Activated naive CD4-positive, alpha-beta T cell treated with anti-CD3 and anti-CD28 coated beads for 36 hours (primary cell): ENCODE measurements at regions of chrX and their contacts with region 1.

Region 1: GRCh38 chrX:71068049-71068763 is at the start of gene SNX12:
- DNase-seq: peak; percentile 93
- H3K4me3 Mint-ChIP-seq: peak within 1 kb of the TSS; percentile 96
- H3K27ac Mint-ChIP-seq: peak within 1 kb of the TSS; percentile 94
- H3K4me1 Mint-ChIP-seq: peaks cover 19% of the 10 kb centered on the region
- H3K27me3 Mint-ChIP-seq: no peaks in the 10 kb centered on the region
- total RNA-seq, gene SNX12: 32.9 to 35.2 TPM

Region 2: GRCh38 chrX:70755850-70756249 is 312.4 kb before region 1 on chrX:
- CTCF ChIA-PET with region 1: no interaction called
- intact Hi-C with region 1: loop called (anchors 10 kb)
- DNase-seq: peak; percentile 78
- H3K4me3 Mint-ChIP-seq: no peak overlapping the region
- H3K27ac Mint-ChIP-seq: no peak overlapping the region
- H3K4me1 Mint-ChIP-seq: peaks cover 12% of the 10 kb centered on the region
- H3K27me3 Mint-ChIP-seq: no peaks in the 10 kb centered on the region

Region 3: GRCh38 chrX:71095543-71095911 is 27.3 kb after region 1 on chrX and contains the start of gene FOXO4:
- CTCF ChIA-PET with region 1: interaction called, 3 read pairs
- intact Hi-C with region 1: loop called (anchors 1 kb)
- DNase-seq: peak; percentile 91
- H3K4me3 Mint-ChIP-seq: peak within 1 kb of the TSS; percentile 82
- H3K27ac Mint-ChIP-seq: peak within 1 kb of the TSS; percentile 72
- H3K4me1 Mint-ChIP-seq: peaks cover 30% of the 10 kb centered on the region
- H3K27me3 Mint-ChIP-seq: no peaks in the 10 kb centered on the region
- total RNA-seq, gene FOXO4: 7.9 to 8.9 TPM

Region 4: GRCh38 chrX:71111141-71111843 is 43.1 kb after region 1 on chrX and contains the start of gene IL2RG:
- CTCF ChIA-PET with region 1: no interaction called
- intact Hi-C with region 1: loop called (anchors 1 kb)
- DNase-seq: peak; percentile 87
- H3K4me3 Mint-ChIP-seq: peak within 1 kb of the TSS; percentile 93
- H3K27ac Mint-ChIP-seq: peak within 1 kb of the TSS; percentile 95
- H3K4me1 Mint-ChIP-seq: peaks cover 37% of the 10 kb centered on the region
- H3K27me3 Mint-ChIP-seq: no peaks in the 10 kb centered on the region
- total RNA-seq, gene IL2RG: 144 to 148 TPM

Region 5: GRCh38 chrX:71118032-71118984 is 50.1 kb after region 1 on chrX and contains the start of gene MED12:
- CTCF ChIA-PET with region 1: no interaction called
- intact Hi-C with region 1: loop called (anchors 2 kb)
- DNase-seq: peak; percentile 90
- H3K4me3 Mint-ChIP-seq: peak within 1 kb of the TSS; percentile 78
- H3K27ac Mint-ChIP-seq: peak within 1 kb of the TSS; percentile 90
- H3K4me1 Mint-ChIP-seq: peaks cover 21% of the 10 kb centered on the region
- H3K27me3 Mint-ChIP-seq: no peaks in the 10 kb centered on the region
- total RNA-seq, gene MED12: 43.5 to 43.6 TPM

Region 6: GRCh38 chrX:71254092-71254941 is 186.1 kb after region 1 on chrX and contains the start of gene ZMYM3:
- CTCF ChIA-PET with region 1: no interaction called
- intact Hi-C with region 1: loop called (anchors 5 kb)
- DNase-seq: peak; percentile 70
- H3K4me3 Mint-ChIP-seq: peak within 1 kb of the TSS; percentile 87
- H3K27ac Mint-ChIP-seq: peak within 1 kb of the TSS; percentile 76
- H3K4me1 Mint-ChIP-seq: peaks cover 29% of the 10 kb centered on the region
- H3K27me3 Mint-ChIP-seq: no peaks in the 10 kb centered on the region
- total RNA-seq, gene ZMYM3: 7.7 to 8.2 TPM

Region 7: DNA sequence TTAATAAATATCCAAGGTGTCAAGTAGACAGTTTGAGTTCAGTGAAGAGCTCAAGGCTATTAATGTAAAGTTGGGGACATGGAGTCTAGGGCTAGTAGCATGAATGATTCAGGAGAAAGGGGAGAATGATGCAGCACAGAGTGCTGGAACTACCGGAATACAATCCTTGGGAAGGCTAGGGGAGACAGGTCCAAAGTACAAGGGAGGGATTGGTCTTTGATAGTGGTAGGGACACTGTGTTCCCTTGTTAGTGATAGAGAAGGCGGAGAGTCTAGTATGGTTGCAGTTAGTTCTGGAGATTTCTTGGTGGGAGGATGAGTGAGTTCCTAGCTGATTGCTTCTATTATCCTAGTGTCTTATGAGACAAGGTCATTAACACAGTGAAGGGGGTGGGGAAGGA is 518.7 kb after region 1 on chrX:
- CTCF ChIA-PET with region 1: no interaction called
- intact Hi-C with region 1: no loop called
- DNase-seq: no peak
- H3K4me3 Mint-ChIP-seq: no peak overlapping the region
- H3K27ac Mint-ChIP-seq: peak overlapping the region; percentile 50
- H3K4me1 Mint-ChIP-seq: peaks cover 5% of the 10 kb centered on the region
- H3K27me3 Mint-ChIP-seq: no peaks in the 10 kb centered on the region